Activated naive CD4-positive, alpha-beta T cell treated with anti-CD3 and anti-CD28 coated beads for 36 hours (primary cell): ENCODE measurements at regions of chr18 and their contacts with region 1.

Region 1: DNA sequence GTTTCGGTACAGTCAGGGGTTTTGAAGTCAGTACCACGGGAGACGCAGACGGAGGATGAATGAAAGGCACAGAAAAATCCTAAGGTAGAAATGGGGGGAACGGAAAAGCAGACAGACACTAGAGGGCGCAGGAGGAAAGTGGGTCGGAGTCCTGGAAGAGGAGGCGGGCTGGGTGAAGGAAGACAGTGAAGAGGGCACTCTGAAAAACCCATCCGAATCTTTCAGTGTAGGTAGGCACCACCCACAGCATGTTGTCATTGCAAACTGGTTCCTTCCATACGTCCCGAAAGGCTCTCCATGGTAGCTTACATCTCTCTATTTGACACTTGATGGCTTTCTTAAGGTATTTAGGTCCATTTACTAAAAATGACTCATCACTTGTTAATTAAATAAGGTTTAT is 18.5 kb upstream of the ZNF236 start:
- DNase-seq: peak; percentile 87
- H3K4me3 Mint-ChIP-seq: peak overlapping the region; percentile 15
- H3K27ac Mint-ChIP-seq: no peak overlapping the region
- H3K4me1 Mint-ChIP-seq: peaks cover 9% of the 10 kb centered on the region
- H3K27me3 Mint-ChIP-seq: peaks cover 5% of the 10 kb centered on the region

Region 2: DNA sequence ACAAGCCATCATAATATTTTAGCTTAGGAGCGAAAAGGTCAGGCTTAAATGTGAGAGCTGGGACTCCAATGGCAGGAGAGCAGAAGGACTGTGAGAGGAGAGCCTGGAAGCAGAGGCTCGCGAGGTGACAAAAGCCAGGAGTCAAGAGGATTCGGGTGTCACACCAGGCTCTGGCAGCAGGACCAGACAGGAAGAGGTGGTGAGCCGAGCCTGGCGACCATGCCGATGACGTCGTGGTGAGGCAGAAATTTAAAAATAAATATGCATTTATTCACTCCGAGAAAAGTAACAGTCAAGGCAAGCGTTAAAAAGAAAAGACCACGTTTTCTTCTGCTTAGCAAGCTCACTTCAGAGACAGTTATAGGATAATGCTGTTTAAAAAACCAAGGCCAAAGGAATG is 12.7 kb before region 1 on chr18:
- CTCF ChIA-PET with region 1: interaction called, 13 read pairs
- intact Hi-C with region 1: no loop called
- DNase-seq: no peak
- H3K4me3 Mint-ChIP-seq: no peak overlapping the region
- H3K27ac Mint-ChIP-seq: no peak overlapping the region
- H3K4me1 Mint-ChIP-seq: peaks cover 7% of the 10 kb centered on the region
- H3K27me3 Mint-ChIP-seq: peaks cover 3% of the 10 kb centered on the region

Region 3: DNA sequence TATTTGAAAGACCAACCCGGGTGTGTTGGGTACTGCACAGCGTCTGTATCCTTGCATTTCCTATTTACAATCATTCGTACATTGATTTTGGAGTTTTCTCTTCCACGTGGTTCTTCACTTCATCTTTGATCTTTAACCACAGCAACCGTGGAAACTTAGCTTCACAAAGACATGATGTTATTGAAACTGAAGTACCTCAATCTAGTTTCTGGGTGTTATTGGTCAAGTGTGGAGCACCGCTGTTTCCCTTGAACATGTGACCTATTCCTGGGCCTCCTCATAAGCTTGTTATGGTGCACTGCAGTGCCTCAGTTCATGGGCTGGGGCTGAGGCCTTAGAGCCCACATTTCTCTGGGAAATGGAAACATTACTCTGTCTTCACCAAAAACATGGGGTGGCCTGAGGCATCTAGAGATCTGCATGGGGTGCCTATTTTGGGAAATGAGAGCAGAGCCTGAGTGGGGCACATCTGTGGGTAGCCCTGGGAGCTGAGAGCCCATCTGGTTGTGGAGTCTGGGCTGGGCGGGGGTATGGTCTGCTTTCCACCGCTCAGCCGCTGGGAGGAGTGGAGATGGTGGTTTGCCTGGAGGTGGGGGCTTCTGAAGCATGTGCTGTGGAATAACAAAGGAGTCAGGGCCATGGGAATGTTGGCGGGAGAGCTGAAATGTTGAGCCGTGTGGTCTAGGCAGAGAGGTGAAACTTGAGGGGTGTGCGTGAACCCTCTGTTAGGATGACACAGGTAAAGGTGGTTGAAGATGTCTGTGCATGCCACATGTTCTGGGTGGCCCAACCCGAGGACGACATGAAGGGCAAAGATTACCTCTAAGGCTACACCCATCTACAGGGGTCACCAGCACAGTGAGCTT is 55.9 kb after region 1 on chr18:
- CTCF ChIA-PET with region 1: interaction called, 5 read pairs
- intact Hi-C with region 1: loop called (anchors 1 kb)
- DNase-seq: peak; percentile 66
- H3K4me3 Mint-ChIP-seq: no peak overlapping the region
- H3K27ac Mint-ChIP-seq: peak overlapping the region; percentile 54
- H3K4me1 Mint-ChIP-seq: peaks cover 22% of the 10 kb centered on the region
- H3K27me3 Mint-ChIP-seq: no peaks in the 10 kb centered on the region

Region 4: GRCh38 chr18:76922107-76922506 is 118.3 kb after region 1 on chr18:
- CTCF ChIA-PET with region 1: interaction called, 9 read pairs
- intact Hi-C with region 1: loop called (anchors 1 kb)
- DNase-seq: peak; percentile 64
- H3K4me3 Mint-ChIP-seq: no peak overlapping the region
- H3K27ac Mint-ChIP-seq: no peak overlapping the region
- H3K4me1 Mint-ChIP-seq: peaks cover 11% of the 10 kb centered on the region
- H3K27me3 Mint-ChIP-seq: no peaks in the 10 kb centered on the region

Region 5: GRCh38 chr18:77054606-77055428 is 251.0 kb after region 1 on chr18:
- CTCF ChIA-PET with region 1: no interaction called
- intact Hi-C with region 1: loop called (anchors 2 kb)
- DNase-seq: peak; percentile 93
- H3K4me3 Mint-ChIP-seq: peak overlapping the region; percentile 78
- H3K27ac Mint-ChIP-seq: peak overlapping the region; percentile 93
- H3K4me1 Mint-ChIP-seq: peaks cover 49% of the 10 kb centered on the region
- H3K27me3 Mint-ChIP-seq: no peaks in the 10 kb centered on the region

Region 6: GRCh38 chr18:77702686-77703085 is 898.9 kb after region 1 on chr18:
- CTCF ChIA-PET with region 1: interaction called, 3 read pairs
- intact Hi-C with region 1: loop called (anchors 5 kb)
- DNase-seq: peak; percentile 45
- H3K4me3 Mint-ChIP-seq: no peak overlapping the region
- H3K27ac Mint-ChIP-seq: no peak overlapping the region
- H3K4me1 Mint-ChIP-seq: no peaks in the 10 kb centered on the region
- H3K27me3 Mint-ChIP-seq: peaks cover 21% of the 10 kb centered on the region

Region 7: GRCh38 chr18:78776706-78777285 is 1973.0 kb after region 1 on chr18:
- CTCF ChIA-PET with region 1: no interaction called
- intact Hi-C with region 1: no loop called
- DNase-seq: no peak
- H3K4me3 Mint-ChIP-seq: no peak overlapping the region
- H3K27ac Mint-ChIP-seq: no peak overlapping the region
- H3K4me1 Mint-ChIP-seq: no peaks in the 10 kb centered on the region
- H3K27me3 Mint-ChIP-seq: no peaks in the 10 kb centered on the region